CD14-positive monocyte (primary cell): ENCODE measurements at regions of chr22 and their contacts with region 1.

Region 1: GRCh38 chr22:17612057-17612456 is 16.5 kb downstream of the ATP6V1E1 start:
- DNase-seq: no peak
- H3K4me3 ChIP-seq: no peak overlapping the region
- H3K4me3 Mint-ChIP-seq: no peak overlapping the region
- H3K27ac ChIP-seq: peak overlapping the region in 1 of 2 donors; percentile 4
- H3K27ac Mint-ChIP-seq: no peak overlapping the region
- H3K4me1 ChIP-seq: no peaks in the 10 kb centered on the region
- H3K4me1 Mint-ChIP-seq: no peaks in the 10 kb centered on the region
- H3K27me3 ChIP-seq: no peaks in the 10 kb centered on the region
- H3K27me3 Mint-ChIP-seq: no peaks in the 10 kb centered on the region
- CTCF ChIP-seq: no peak

Region 2: DNA sequence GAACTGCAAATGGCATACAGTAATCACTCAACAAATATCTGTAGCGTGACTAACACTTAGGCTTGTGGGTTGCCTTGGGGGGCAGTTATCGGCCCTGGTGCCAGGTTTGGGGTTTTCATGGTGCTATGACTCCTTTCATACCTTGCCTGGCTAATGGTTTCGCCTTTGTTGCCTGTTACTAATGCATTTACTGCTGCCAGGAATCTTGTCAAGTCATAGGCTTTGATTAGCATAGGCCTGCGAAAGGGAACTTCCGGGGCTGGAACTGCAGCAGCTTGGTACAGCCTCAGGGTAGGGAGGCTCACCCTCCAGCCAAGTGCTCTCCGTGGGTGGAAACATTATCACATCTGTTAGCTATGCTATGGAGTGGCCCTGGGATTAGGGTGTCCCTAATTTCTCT is 35.6 kb before region 1 on chr22:
- intact Hi-C with region 1: no loop called
- DNase-seq: no peak
- H3K4me3 ChIP-seq: no peak overlapping the region
- H3K4me3 Mint-ChIP-seq: no peak overlapping the region
- H3K27ac ChIP-seq: no peak overlapping the region
- H3K27ac Mint-ChIP-seq: no peak overlapping the region
- H3K4me1 ChIP-seq: no peaks in the 10 kb centered on the region
- H3K4me1 Mint-ChIP-seq: no peaks in the 10 kb centered on the region
- H3K27me3 ChIP-seq: no peaks in the 10 kb centered on the region
- H3K27me3 Mint-ChIP-seq: peaks cover 0 to 11% (median 7%) of the 10 kb centered on the region in 3 donors
- CTCF ChIP-seq: no peak

Region 3: DNA sequence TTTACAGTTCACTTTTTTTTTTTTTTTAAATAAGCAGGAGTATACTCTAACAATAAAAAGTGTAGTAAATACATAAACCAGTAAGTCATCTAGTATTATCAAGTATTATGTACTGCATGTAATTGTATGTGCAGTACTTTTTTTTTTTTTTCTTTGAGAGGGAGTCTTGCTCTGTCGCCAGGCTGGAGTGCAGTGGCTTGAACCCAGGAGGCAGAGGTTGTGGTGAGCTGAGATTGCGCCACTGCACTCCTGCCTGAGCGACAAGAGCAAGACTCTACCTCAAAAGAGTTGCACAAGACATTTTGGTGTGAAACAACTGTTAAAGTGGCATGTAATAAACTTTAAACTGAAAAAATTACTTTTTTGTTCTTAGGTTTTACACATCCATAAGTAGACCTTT is 43.2 kb after region 1 on chr22:
- intact Hi-C with region 1: no loop called
- DNase-seq: peak in 2 of 3 donors; percentile 49 to 62
- H3K4me3 ChIP-seq: no peak overlapping the region
- H3K4me3 Mint-ChIP-seq: no peak overlapping the region
- H3K27ac ChIP-seq: peak overlapping the region; percentile 64 to 77
- H3K27ac Mint-ChIP-seq: peak overlapping the region; percentile 76 to 88 (median 85)
- H3K4me1 ChIP-seq: peaks cover 14 to 28% of the 10 kb centered on the region in 2 donors
- H3K4me1 Mint-ChIP-seq: peaks cover 35% of the 10 kb centered on the region
- H3K27me3 ChIP-seq: no peaks in the 10 kb centered on the region
- H3K27me3 Mint-ChIP-seq: no peaks in the 10 kb centered on the region
- CTCF ChIP-seq: no peak

Region 4: DNA sequence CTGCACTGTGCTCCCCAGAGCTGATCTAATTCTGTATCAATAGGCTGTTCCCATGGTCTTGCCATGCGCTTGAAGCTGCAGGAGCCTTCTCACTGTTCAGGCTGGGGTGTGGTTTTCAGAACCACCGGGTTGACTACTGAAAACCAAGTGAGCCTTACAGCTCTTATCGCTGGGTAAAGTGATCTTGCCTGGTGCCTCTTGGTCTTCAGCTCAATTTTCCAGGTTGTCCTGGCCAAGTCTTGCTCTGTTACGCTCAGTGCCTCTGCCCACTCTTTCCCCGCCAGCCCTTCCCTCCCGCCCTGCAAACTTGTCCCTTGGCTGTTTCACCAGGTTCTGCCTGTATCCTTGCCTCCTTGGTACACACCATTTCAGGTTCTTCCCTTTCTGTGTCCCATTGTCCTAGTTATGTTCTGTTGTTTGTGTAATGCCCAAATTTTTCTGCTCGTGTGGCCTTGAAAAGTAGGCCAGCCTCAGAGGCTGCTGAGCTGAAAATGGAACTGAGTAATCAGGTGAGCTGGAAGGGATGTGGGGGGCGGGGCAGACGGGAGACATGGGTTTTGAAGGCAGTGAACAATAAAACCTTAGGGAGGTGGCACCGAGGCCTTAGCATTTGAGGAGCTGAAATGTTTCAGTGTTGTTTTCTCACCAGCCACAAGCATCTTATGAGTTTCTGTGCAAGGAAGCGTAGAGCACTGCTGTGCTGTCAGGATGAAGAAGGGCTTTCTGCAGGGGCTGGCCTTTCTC is 476.9 kb after region 1 on chr22:
- intact Hi-C with region 1: loop called in 1 of 2 experiments (anchors 10 kb)
- DNase-seq: no peak
- H3K4me3 ChIP-seq: no peak overlapping the region
- H3K4me3 Mint-ChIP-seq: no peak overlapping the region
- H3K27ac ChIP-seq: no peak overlapping the region
- H3K27ac Mint-ChIP-seq: peak overlapping the region in 2 of 7 donors; percentile 2 to 10
- H3K4me1 ChIP-seq: no peaks in the 10 kb centered on the region
- H3K4me1 Mint-ChIP-seq: no peaks in the 10 kb centered on the region
- H3K27me3 ChIP-seq: no peaks in the 10 kb centered on the region
- H3K27me3 Mint-ChIP-seq: no peaks in the 10 kb centered on the region
- CTCF ChIP-seq: no peak